ENCODE measurements at regions of chr7 and their contacts with region 1.

Region 1: GRCh38 chr7:30594549-30595435 is at the start of gene GARS1:
- DNase-seq: peak; percentile 97
- H3K4me3 Mint-ChIP-seq: peak within 1 kb of the TSS; percentile 94
- H3K27ac Mint-ChIP-seq: peak within 1 kb of the TSS; percentile 98
- H3K4me1 Mint-ChIP-seq: peaks cover 49% of the 10 kb centered on the region
- H3K27me3 Mint-ChIP-seq: no peaks in the 10 kb centered on the region
- total RNA-seq, gene GARS1: 261 and 262 TPM in 2 replicates

Region 2: GRCh38 chr7:30134611-30135545 is 459.9 kb before region 1 on chr7 and contains the start of gene MTURN:
- intact Hi-C with region 1: loop called (anchors 10 kb)
- DNase-seq: peak; percentile 96
- H3K4me3 Mint-ChIP-seq: peak within 1 kb of the TSS; percentile 92
- H3K27ac Mint-ChIP-seq: peak within 1 kb of the TSS; percentile 81
- H3K4me1 Mint-ChIP-seq: peaks cover 10% of the 10 kb centered on the region
- H3K27me3 Mint-ChIP-seq: peaks cover 35% of the 10 kb centered on the region
- total RNA-seq, gene MTURN: 3.8 and 4.2 TPM in 2 replicates

Region 3: DNA sequence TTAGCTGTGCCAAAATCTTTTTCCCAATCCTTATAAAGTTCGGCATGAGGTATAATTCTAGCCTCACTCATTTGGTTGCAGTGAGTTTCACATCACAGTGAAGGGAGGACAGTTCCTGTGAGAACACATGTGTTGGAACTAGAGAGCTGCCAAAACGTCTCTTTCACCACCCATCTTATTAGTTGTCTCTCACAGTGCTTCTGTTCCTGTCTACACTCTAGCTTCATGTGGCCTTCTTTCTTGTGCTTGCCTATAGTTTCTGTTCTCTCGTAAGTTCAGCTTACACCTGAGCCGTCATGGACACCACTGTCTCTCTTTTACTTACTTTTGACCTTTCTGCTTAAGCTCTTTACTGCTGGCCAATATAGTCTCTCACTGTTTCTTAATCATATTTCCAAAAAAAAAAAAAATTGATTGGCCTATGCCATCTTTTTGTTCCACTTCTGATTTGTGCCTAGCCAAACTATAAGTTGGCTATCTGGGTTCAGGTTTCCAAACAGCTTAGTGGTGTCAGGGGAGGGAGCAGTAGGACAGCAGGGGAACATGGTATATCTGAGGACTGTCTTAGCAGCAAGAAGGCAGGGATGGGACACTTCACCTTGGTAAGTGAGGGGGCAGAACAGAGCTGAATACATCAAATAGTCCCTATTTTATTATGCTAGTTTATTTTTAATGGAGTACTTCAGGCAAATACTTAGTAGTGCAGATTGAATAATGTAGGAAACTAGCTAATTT is 272.4 kb before region 1 on chr7:
- intact Hi-C with region 1: loop called (anchors 10 kb)
- DNase-seq: peak; percentile 79
- H3K4me3 Mint-ChIP-seq: peak overlapping the region; percentile 78
- H3K27ac Mint-ChIP-seq: peak overlapping the region; percentile 96
- H3K4me1 Mint-ChIP-seq: peaks cover 42% of the 10 kb centered on the region
- H3K27me3 Mint-ChIP-seq: no peaks in the 10 kb centered on the region

Region 4: GRCh38 chr7:30504347-30505173 is 90.2 kb before region 1 on chr7 and contains the start of gene GGCT:
- intact Hi-C with region 1: loop called (anchors 1 kb)
- DNase-seq: peak; percentile 99
- H3K4me3 Mint-ChIP-seq: peak within 1 kb of the TSS; percentile 87
- H3K27ac Mint-ChIP-seq: peak within 1 kb of the TSS; percentile 84
- H3K4me1 Mint-ChIP-seq: peaks cover 44% of the 10 kb centered on the region
- H3K27me3 Mint-ChIP-seq: no peaks in the 10 kb centered on the region
- total RNA-seq, gene GGCT: 76.1 and 80.3 TPM in 2 replicates

Region 5: DNA sequence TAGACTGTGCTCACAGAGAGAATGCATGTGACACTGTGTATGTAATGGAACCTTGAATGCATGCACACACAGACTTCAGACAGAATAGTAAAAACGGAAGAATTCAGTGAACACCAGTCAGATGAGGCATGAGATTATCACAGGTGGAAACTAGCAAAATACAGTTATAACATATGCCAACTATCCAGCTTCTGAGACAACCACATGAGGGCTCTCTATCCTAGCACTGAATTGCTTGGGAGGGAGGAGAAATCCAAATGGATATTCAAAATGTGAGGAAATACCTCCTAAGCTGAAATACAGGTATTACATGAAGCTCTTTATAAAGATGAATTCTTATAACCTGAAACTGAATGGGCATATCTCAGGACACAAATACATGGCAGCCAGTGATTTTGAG is 30.5 kb after region 1 on chr7:
- intact Hi-C with region 1: loop called (anchors 1 kb)
- DNase-seq: no peak
- H3K4me3 Mint-ChIP-seq: no peak overlapping the region
- H3K27ac Mint-ChIP-seq: peak overlapping the region; percentile 44
- H3K4me1 Mint-ChIP-seq: peaks cover 20% of the 10 kb centered on the region
- H3K27me3 Mint-ChIP-seq: no peaks in the 10 kb centered on the region

Measured in activated CD4-positive, alpha-beta T cell treated with anti-CD3 and anti-CD28 coated beads, Interleukin-2, amount 10 ng/mL, durations not matched to agents 24 days and 14 days (primary cell).